ENCODE measurements at regions of chr7 and their contacts with region 1.

Region 1: GRCh38 chr7:17530741-17531417 is 232.4 kb downstream of the AHR start:
- DNase-seq: no peak
- ATAC-seq: peak; percentile 31

Region 2: DNA sequence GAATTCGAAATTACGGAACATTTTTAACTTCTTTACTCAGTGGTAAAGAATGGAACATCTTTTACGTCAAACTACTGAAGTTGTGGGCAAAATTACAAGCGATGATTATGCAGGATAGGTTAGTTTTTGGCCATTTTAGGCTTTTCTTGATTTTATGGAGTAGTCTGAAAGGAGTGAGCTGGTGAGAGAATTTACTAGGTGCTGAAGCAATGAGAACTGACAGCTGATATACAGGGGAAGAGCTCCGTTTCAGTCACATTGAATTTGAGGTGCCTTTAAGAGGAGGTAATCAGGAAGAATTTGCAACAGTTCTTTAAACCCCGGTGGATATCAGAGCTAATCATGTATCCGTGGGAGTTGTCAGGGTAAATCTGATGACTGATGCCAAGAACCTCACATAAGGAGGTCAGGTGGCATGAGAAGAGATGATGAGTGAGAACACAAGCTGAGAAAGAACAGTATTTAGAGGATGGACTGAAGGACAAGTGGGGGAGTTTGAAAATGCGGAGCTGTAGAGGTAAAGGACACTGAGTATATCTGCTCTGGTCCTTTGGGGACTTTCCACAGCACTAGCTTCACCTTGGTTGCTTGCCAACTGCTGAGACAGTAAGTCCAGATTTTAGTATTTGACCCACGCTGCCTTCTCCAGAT is 128.1 kb before region 1 on chr7:
- intact Hi-C with region 1: no loop called
- DNase-seq: no peak
- ATAC-seq: no peak

Region 3: GRCh38 chr7:18889436-18889835 is 1358.6 kb after region 1 on chr7:
- intact Hi-C with region 1: loop called (anchors 5 kb)
- DNase-seq: no peak
- ATAC-seq: no peak

Measured in sciatic nerve (tissue), 2 donors.